PC-3 (cell line): ENCODE measurements at regions of chr6 and their contacts with region 1.

Region 1: DNA sequence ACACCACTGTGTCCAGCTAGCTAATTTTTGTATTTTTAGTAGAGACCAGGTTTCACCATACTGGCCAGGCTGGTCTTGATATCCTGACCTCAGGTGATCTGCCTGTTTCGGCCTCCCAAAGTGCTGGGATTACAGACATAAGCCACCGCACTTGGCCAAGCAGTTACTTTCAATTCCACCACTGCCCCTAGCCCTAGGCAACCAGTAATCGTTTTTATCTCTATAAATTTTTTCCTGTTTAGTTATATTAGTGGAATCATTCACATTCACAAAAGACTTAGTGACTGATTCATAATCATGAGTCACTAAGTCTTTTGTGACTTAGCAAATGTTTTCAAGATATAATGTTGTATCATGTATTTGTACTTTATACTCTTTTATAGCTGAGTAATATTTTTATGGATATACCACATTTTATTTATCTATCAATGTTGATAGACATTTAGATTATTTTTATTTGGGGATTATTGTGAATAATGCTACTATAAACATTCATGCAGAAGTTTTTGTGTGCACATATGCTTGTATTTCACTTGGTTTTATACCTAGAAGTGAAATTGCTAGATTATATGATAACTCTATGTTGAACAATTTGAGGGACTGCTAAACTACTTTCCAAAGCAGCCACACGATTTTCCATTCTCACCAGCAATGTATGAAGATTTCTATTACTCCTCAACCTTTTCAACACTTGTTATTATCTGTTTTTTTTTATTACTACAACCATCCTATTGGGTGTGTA is 421.4 kb upstream of the ID4 start:
- DNase-seq: peak; percentile 92
- ATAC-seq: peak; percentile 82
- H3K4me3 ChIP-seq: no peak overlapping the region
- H3K27ac ChIP-seq: peak overlapping the region; percentile 89
- H3K4me1 ChIP-seq: peaks cover 59% of the 10 kb centered on the region
- H3K27me3 ChIP-seq: no peaks in the 10 kb centered on the region
- CTCF ChIP-seq: no peak

Region 2: GRCh38 chr6:19362396-19362795 is 53.4 kb before region 1 on chr6:
- CTCF ChIA-PET with region 1: no interaction called
- POLR2A ChIA-PET with region 1: no interaction called
- intact Hi-C with region 1: no loop called
- DNase-seq: no peak
- ATAC-seq: no peak
- H3K4me3 ChIP-seq: no peak overlapping the region
- H3K27ac ChIP-seq: no peak overlapping the region
- H3K4me1 ChIP-seq: no peaks in the 10 kb centered on the region
- H3K27me3 ChIP-seq: no peaks in the 10 kb centered on the region
- CTCF ChIP-seq: no peak

Region 3: GRCh38 chr6:19444481-19444880 is 28.7 kb after region 1 on chr6:
- CTCF ChIA-PET with region 1: no interaction called
- POLR2A ChIA-PET with region 1: no interaction called
- intact Hi-C with region 1: loop called (anchors 1 kb)
- DNase-seq: peak; percentile 74
- ATAC-seq: peak; percentile 92
- H3K4me3 ChIP-seq: no peak overlapping the region
- H3K27ac ChIP-seq: no peak overlapping the region
- H3K4me1 ChIP-seq: peaks cover 18% of the 10 kb centered on the region
- H3K27me3 ChIP-seq: no peaks in the 10 kb centered on the region
- CTCF ChIP-seq: no peak

Region 4: DNA sequence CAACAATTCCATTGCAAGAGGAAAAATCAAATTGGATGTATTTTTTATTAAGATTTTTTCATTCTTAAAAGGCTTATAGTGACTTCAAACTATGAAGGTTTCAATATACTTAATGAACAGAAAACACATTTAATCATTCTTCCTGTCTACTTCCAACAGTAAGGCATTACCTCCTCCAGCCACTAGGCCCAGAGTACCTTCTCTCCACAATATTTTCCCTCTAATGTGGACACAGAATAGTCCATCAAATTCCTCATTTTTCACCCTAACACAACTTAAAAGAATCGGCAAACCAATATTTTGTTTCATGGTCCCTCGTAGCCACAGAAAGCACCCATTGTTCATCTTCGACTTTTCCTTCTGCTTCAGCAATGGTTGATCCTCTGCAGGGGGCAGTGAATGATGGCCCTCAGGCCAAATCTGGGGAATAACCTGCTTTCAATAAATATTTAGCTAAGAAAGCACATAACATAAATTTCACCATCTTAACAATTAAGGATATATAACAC is 86.0 kb after region 1 on chr6:
- CTCF ChIA-PET with region 1: no interaction called
- POLR2A ChIA-PET with region 1: no interaction called
- intact Hi-C with region 1: no loop called
- DNase-seq: no peak
- ATAC-seq: no peak
- H3K4me3 ChIP-seq: no peak overlapping the region
- H3K27ac ChIP-seq: no peak overlapping the region
- H3K4me1 ChIP-seq: no peaks in the 10 kb centered on the region
- H3K27me3 ChIP-seq: no peaks in the 10 kb centered on the region
- CTCF ChIP-seq: peak; percentile 27; the same call in 1 of the 2 replicates